ENCODE measurements at regions of chr9 and their contacts with region 1.

Region 1: DNA sequence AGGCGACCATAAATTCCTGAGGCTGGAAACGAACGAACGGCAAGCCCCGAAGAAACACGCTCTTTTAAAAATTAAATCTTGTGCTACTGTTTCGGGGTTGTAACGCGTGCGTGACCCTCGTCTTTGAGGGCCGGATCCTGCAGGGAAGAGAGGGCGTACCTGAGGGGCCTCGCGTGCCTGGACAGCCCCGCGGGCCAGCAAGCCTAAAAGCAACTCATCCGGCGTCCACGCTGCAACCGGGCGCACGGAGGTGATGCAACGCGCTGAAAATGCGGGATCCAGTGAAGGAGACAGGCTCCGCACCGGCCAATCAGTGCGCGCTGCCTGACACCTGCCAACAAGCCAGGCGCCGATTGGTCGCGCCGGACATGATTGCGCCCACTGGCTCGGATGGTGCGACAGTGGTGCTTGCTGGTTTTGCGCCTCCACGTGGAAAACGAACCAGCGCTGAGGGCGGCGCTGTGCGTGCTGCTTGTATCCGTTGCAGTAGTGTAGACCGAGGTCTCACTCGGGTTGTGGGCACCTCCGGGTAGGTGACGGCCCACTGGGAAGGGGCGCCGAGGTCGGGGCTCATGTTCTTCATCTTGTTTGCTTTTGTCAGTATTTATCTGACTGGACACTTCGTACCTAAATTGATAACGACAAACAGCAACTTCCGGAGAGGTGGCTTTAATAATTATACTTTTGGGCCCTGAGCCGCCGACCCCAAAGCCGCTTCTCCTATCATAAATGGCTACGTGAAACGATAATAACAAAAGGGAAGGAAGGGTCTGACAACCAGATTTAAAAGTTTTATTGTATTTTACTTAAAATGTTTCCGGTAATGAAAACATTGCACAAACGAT is at the start of gene IARS1:
- DNase-seq: peak; percentile 97 to 99
- ATAC-seq: peak; percentile 93 to 94
- H3K4me3 ChIP-seq: peak within 1 kb of the TSS; percentile 71 to 88 (median 79)
- H3K27ac ChIP-seq: peak within 1 kb of the TSS; percentile 81 to 91 (median 88)
- H3K4me1 ChIP-seq: peaks cover 25 to 26% of the 10 kb centered on the region in 2 donors
- H3K27me3 ChIP-seq: no peaks in the 10 kb centered on the region
- CTCF ChIP-seq: peak in 3 of 5 experiments; percentile 23 to 36 (median 27)
- POLR2A ChIP-seq: peak; percentile 72 to 87
- total RNA-seq, gene IARS1: 87.0 to 111 (median 100) TPM

Region 2: DNA sequence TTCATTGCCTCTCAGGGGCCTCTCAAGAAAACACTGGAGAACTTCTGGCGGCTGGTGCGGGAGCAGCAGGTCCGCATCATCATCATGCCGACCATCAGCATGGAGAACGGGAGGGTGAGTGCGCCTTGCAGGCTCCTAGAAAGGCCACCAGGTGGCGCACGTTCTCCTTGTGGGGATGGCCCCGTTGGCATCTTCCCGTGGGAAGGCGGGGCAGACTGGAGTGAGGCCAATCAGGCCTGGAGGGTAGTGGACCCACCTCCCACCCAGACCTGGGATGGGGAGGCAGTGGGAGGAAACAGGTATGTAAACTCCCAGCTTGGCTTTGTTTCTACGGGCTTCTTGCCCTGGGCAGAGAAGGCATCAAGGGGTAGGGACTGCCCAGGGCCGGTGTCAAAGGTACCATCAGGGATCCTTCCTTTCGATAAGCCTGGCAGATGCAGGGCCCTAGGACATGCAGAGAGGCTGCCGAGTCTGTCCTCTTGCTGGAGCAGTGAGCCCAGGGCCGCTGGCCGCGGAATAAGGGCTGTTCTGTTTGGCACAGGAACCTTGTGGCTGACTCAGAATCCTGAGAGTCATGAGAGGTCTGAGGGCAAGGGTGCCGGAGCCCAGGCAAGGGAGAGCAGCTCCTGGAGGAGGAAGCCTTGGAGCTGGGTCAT is 159.6 kb before region 1 on chr9:
- in situ Hi-C with region 1: loop called in 1 of 4 experiments (anchors 25 kb)
- intact Hi-C with region 1: no loop called
- DNase-seq: peak in 1 of 2 donors; percentile 58
- ATAC-seq: peak in 1 of 2 donors; percentile 87
- H3K4me3 ChIP-seq: no peak overlapping the region
- H3K27ac ChIP-seq: no peak overlapping the region
- H3K4me1 ChIP-seq: no peaks in the 10 kb centered on the region
- H3K27me3 ChIP-seq: no peaks in the 10 kb centered on the region
- CTCF ChIP-seq: peak; percentile 56 to 91 (median 70)
- POLR2A ChIP-seq: no peak

Region 3: GRCh38 chr9:92242260-92243136 is 51.2 kb before region 1 on chr9:
- in situ Hi-C with region 1: no loop called
- intact Hi-C with region 1: no loop called
- DNase-seq: no peak
- ATAC-seq: no peak
- H3K4me3 ChIP-seq: no peak overlapping the region
- H3K27ac ChIP-seq: no peak overlapping the region
- H3K4me1 ChIP-seq: no peaks in the 10 kb centered on the region
- H3K27me3 ChIP-seq: no peaks in the 10 kb centered on the region
- CTCF ChIP-seq: no peak
- POLR2A ChIP-seq: no peak

Region 4: GRCh38 chr9:92325269-92325990 is 31.8 kb after region 1 on chr9 and contains the starts of genes CENPP and NOL8:
- in situ Hi-C with region 1: no loop called
- intact Hi-C with region 1: loop called (anchors 1 kb)
- DNase-seq: peak; percentile 80 to 85
- ATAC-seq: peak; percentile 98
- H3K4me3 ChIP-seq: peak within 1 kb of the TSS; percentile 77 to 95 (median 85)
- H3K27ac ChIP-seq: peak within 1 kb of the TSS; percentile 91 to 98 (median 97)
- H3K4me1 ChIP-seq: peaks cover 21 to 31% of the 10 kb centered on the region in 2 donors
- H3K27me3 ChIP-seq: no peaks in the 10 kb centered on the region
- CTCF ChIP-seq: peak in 1 of 5 experiments; percentile 24
- POLR2A ChIP-seq: peak in 1 of 2 donors; percentile 67
- total RNA-seq, gene CENPP: 1.8 to 11.5 (median 8.7) TPM
- total RNA-seq, gene NOL8: 11.5 to 20.2 (median 14.0) TPM

Region 5: GRCh38 chr9:92378865-92379560 is 85.3 kb after region 1 on chr9:
- in situ Hi-C with region 1: no loop called
- intact Hi-C with region 1: no loop called
- DNase-seq: no peak
- ATAC-seq: no peak
- H3K4me3 ChIP-seq: no peak overlapping the region
- H3K27ac ChIP-seq: no peak overlapping the region
- H3K4me1 ChIP-seq: no peaks in the 10 kb centered on the region
- H3K27me3 ChIP-seq: no peaks in the 10 kb centered on the region
- CTCF ChIP-seq: no peak
- POLR2A ChIP-seq: no peak

Region 6: GRCh38 chr9:92764988-92765936 is 471.6 kb after region 1 on chr9:
- in situ Hi-C with region 1: no loop called
- intact Hi-C with region 1: loop called (anchors 10 kb)
- DNase-seq: peak; percentile 99
- ATAC-seq: peak; percentile 84 to 86
- H3K4me3 ChIP-seq: peak overlapping the region; percentile 72 to 99 (median 94)
- H3K27ac ChIP-seq: peak overlapping the region; percentile 93 to 100 (median 98)
- H3K4me1 ChIP-seq: peaks cover 38 to 47% of the 10 kb centered on the region in 2 donors
- H3K27me3 ChIP-seq: no peaks in the 10 kb centered on the region
- CTCF ChIP-seq: peak; percentile 83 to 98 (median 96)
- POLR2A ChIP-seq: peak; percentile 80 to 82

Region 7: DNA sequence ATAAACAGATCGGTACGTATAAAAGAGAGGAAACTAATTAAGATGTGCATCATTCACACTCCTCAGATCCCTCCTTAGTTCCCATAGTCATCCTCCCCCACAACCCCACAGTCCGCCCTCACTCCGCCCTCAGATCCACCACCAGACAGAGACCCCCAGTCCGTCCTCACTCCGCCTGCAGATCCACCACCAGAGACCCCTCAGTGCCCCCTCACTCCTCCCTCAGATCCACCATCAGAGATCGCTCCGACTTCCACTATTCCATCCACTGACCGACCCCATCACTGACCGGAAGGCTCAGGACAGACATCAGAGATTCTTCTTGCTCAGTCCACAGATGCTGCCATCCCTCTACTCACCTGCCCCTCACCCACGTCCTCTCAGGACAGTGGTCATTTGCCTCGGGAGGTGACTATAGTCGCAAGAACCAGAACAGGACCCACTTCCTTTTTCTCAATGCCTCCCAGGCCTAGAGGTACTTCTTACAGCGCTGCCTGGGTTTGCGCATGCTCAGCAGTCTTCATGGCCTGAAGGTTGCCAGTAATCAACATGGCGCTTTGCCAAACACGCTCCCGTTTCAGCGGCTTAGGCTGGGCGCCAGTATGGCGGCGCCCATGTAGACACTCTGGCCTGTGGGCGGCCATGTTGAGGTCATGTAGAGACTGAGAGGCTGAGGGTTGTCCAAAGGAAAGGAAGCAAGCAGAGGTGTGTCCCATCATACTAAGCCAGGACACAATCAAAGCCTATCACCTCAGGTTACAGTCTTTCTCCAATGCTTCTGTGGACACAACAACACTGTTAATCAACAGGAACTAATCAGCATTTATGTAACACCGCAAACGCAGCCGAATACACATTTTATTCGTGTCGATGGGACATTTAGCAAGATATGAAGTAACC is 584.1 kb after region 1 on chr9 and contains the start of gene ZNF484:
- in situ Hi-C with region 1: no loop called
- intact Hi-C with region 1: loop called (anchors 5 kb)
- DNase-seq: peak; percentile 90 to 96
- ATAC-seq: peak; percentile 100
- H3K4me3 ChIP-seq: peak within 1 kb of the TSS; percentile 66 to 79 (median 73)
- H3K27ac ChIP-seq: peak within 1 kb of the TSS; percentile 80 to 87 (median 81)
- H3K4me1 ChIP-seq: peaks cover 9 to 14% of the 10 kb centered on the region in 2 donors
- H3K27me3 ChIP-seq: no peaks in the 10 kb centered on the region
- CTCF ChIP-seq: no peak
- POLR2A ChIP-seq: no peak
- total RNA-seq, gene ZNF484: 2.8 to 7.3 (median 4.1) TPM